PC-9 (cell line): ENCODE measurements at regions of chr11 and their contacts with region 1.

Region 1: GRCh38 chr11:1202776-1203504 is 19.9 kb upstream of the MUC5B start:
- DNase-seq: peak; percentile 58 to 65
- H3K4me3 ChIP-seq: no peak overlapping the region
- H3K27ac ChIP-seq: peak overlapping the region; percentile 74
- H3K4me1 ChIP-seq: peaks cover 45% of the 10 kb centered on the region
- H3K27me3 ChIP-seq: no peaks in the 10 kb centered on the region
- CTCF ChIP-seq: peak; percentile 80

Region 2: DNA sequence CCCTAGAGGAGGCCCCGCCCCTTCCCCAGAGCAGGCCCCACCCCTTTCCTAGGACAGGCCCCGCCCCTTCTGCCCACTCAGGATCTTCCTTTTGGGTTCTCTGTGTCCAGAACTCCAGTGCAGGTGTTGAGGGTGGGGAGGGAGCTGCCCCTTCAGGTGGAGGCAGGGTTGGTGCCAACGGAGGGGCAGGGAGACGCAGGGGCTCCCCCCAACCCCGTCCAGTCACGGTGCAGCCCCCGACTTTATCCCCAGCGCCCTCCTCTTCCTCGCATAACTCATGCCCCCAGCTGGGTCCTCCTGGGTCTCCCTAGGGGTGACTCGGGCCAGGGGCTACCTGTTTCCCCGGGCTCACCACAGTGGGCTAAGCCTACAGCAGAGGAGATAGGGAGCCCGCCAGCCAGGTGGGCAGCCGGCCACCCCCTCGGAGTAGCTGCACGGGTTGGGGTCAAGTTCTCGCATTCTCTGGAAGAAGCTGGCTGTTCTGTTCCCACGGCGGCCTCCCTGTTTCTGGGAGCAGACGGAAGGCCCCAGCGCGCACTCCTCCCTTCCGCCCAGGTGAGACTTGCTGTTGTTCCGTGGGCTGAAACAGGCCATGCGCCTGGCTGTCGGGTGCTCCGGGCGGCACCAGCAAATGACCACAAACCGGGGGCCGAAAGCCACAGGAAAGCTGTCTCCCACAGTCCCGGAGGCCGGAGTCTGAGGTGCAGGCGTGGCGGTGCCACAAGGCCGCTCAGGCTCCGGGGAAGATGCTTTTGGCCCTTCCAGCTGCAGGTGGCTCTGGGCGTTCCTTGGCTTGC is 89.3 kb before region 1 on chr11:
- CTCF ChIA-PET with region 1: no interaction called
- POLR2A ChIA-PET with region 1: no interaction called
- intact Hi-C with region 1: loop called (anchors 10 kb)
- DNase-seq: no peak
- H3K4me3 ChIP-seq: no peak overlapping the region
- H3K27ac ChIP-seq: no peak overlapping the region
- H3K4me1 ChIP-seq: no peaks in the 10 kb centered on the region
- H3K27me3 ChIP-seq: 0 out of 2 replicates have a peak, but pooled peaks cover 4% of the 10 kb centered on the region
- CTCF ChIP-seq: no peak

Region 3: DNA sequence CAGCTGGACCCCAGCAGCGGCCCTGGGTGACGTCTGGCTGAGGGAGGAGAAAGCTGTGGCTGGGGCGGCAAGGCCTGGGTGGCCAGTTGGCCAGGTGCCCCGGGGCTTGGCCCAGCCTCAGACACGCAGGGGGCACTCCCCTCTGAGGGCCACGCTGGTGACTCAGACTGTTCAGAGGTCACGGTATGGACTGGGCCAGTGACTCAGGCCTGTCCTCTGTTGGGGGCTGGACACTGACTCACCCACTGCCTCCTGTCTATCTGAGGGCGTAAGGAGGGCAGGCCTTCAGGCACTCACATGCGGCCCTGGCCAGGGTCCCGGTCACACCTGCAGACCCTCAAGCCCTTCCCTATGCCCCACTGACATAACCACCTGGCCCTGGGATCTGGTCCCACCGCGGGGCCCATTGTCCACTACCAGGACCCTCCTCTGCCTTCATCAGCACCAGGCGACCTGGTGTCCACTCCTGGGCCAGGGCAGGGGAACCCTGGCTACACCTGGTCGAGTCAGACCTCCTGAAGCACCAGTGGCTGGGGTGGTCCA is 48.9 kb before region 1 on chr11:
- CTCF ChIA-PET with region 1: no interaction called
- POLR2A ChIA-PET with region 1: no interaction called
- intact Hi-C with region 1: loop called (anchors 1 kb)
- DNase-seq: peak; percentile 90 to 94
- H3K4me3 ChIP-seq: peak overlapping the region; percentile 48; the same call in 1 of the 2 replicates
- H3K27ac ChIP-seq: peak overlapping the region; percentile 96
- H3K4me1 ChIP-seq: peaks cover 53% of the 10 kb centered on the region
- H3K27me3 ChIP-seq: no peaks in the 10 kb centered on the region
- CTCF ChIP-seq: no peak

Region 4: GRCh38 chr11:1233331-1233715 is 30.4 kb after region 1 on chr11:
- CTCF ChIA-PET with region 1: no interaction called
- POLR2A ChIA-PET with region 1: no interaction called
- intact Hi-C with region 1: loop called (anchors 1 kb)
- DNase-seq: no peak
- H3K4me3 ChIP-seq: no peak overlapping the region
- H3K27ac ChIP-seq: no peak overlapping the region
- H3K4me1 ChIP-seq: peaks cover 11% of the 10 kb centered on the region
- H3K27me3 ChIP-seq: no peaks in the 10 kb centered on the region
- CTCF ChIP-seq: peak; percentile 52; the same call in 1 of the 2 replicates

Region 5: GRCh38 chr11:1262172-1263006 is 59.4 kb after region 1 on chr11:
- CTCF ChIA-PET with region 1: no interaction called
- POLR2A ChIA-PET with region 1: interaction called, 3 read pairs
- intact Hi-C with region 1: loop called (anchors 5 kb)
- DNase-seq: peak; percentile 70 to 91
- H3K4me3 ChIP-seq: peak overlapping the region; percentile 48; the same call in 1 of the 2 replicates
- H3K27ac ChIP-seq: peak overlapping the region; percentile 23; the same call in 1 of the 2 replicates
- H3K4me1 ChIP-seq: peaks cover 6% of the 10 kb centered on the region
- H3K27me3 ChIP-seq: no peaks in the 10 kb centered on the region
- CTCF ChIP-seq: no peak

Region 6: DNA sequence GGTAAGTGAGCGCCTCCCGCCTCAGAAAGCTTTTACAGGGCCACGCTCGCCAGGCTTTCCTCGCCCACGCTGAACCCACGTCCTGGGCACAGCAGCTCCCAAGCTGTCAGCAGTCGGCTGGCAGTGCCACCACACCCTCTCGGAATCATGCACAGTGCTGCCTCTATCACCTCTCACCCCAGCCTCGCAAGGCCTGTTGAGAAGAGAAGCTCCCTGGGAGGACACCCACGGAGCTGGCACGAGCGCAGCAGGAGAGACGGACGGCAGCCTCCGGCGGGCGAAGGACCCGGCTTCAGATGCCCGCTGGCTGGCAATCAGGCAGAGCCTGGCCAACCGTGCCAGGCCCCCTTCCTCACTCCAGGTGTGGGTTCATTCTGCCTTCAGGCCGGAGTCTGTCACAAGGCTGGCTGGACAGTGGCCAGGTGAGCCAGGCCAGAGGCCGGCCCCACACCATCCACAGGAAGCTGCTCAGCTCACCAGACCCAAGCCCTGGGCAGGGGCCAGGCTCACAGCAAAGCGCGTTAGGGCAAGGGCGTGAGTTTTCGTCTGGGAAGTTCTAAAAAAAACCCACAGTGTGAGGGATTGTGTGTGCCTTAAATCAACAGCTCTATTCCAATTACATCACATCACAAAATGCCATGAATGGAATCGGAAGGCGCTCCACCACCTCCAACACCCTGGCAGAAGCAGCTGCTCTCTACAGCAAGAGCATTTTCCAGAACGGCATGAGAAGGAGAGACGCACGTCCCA is 73.3 kb after region 1 on chr11:
- CTCF ChIA-PET with region 1: no interaction called
- POLR2A ChIA-PET with region 1: no interaction called
- intact Hi-C with region 1: no loop called
- DNase-seq: no peak
- H3K4me3 ChIP-seq: no peak overlapping the region
- H3K27ac ChIP-seq: no peak overlapping the region
- H3K4me1 ChIP-seq: no peaks in the 10 kb centered on the region
- H3K27me3 ChIP-seq: no peaks in the 10 kb centered on the region
- CTCF ChIP-seq: no peak

Region 7: GRCh38 chr11:1389103-1389931 is 186.4 kb after region 1 on chr11:
- CTCF ChIA-PET with region 1: no interaction called
- POLR2A ChIA-PET with region 1: no interaction called
- intact Hi-C with region 1: loop called (anchors 5 kb)
- DNase-seq: peak; percentile 68 to 94
- H3K4me3 ChIP-seq: peak overlapping the region; percentile 26; the same call in 1 of the 2 replicates
- H3K27ac ChIP-seq: no peak overlapping the region
- H3K4me1 ChIP-seq: no peaks in the 10 kb centered on the region
- H3K27me3 ChIP-seq: no peaks in the 10 kb centered on the region
- CTCF ChIP-seq: no peak

Region 8: GRCh38 chr11:1515082-1516060 is 312.4 kb after region 1 on chr11:
- CTCF ChIA-PET with region 1: no interaction called
- POLR2A ChIA-PET with region 1: no interaction called
- intact Hi-C with region 1: loop called (anchors 5 kb)
- DNase-seq: peak in 1 of 2 experiments; percentile 66
- H3K4me3 ChIP-seq: no peak overlapping the region
- H3K27ac ChIP-seq: no peak overlapping the region
- H3K4me1 ChIP-seq: no peaks in the 10 kb centered on the region
- H3K27me3 ChIP-seq: no peaks in the 10 kb centered on the region
- CTCF ChIP-seq: peak; percentile 76

Region 9: GRCh38 chr11:2287091-2287490 is 1084.2 kb after region 1 on chr11:
- CTCF ChIA-PET with region 1: no interaction called
- POLR2A ChIA-PET with region 1: no interaction called
- intact Hi-C with region 1: no loop called
- DNase-seq: no peak
- H3K4me3 ChIP-seq: no peak overlapping the region
- H3K27ac ChIP-seq: no peak overlapping the region
- H3K4me1 ChIP-seq: no peaks in the 10 kb centered on the region
- H3K27me3 ChIP-seq: peaks cover 8% of the 10 kb centered on the region
- CTCF ChIP-seq: no peak